ENCODE measurements at regions of chr2 and their contacts with region 1.

Region 1: GRCh38 chr2:96265840-96266679 is at the starts of genes CIAO1 and TMEM127:
- DNase-seq: peak; percentile 97 to 100 (median 99)

Region 2: GRCh38 chr2:96145036-96145847 is 120.8 kb before region 1 on chr2 and contains the start of gene DUSP2:
- intact Hi-C with region 1: loop called (anchors 2 kb)
- DNase-seq: peak; percentile 35 to 95 (median 58)

Region 3: DNA sequence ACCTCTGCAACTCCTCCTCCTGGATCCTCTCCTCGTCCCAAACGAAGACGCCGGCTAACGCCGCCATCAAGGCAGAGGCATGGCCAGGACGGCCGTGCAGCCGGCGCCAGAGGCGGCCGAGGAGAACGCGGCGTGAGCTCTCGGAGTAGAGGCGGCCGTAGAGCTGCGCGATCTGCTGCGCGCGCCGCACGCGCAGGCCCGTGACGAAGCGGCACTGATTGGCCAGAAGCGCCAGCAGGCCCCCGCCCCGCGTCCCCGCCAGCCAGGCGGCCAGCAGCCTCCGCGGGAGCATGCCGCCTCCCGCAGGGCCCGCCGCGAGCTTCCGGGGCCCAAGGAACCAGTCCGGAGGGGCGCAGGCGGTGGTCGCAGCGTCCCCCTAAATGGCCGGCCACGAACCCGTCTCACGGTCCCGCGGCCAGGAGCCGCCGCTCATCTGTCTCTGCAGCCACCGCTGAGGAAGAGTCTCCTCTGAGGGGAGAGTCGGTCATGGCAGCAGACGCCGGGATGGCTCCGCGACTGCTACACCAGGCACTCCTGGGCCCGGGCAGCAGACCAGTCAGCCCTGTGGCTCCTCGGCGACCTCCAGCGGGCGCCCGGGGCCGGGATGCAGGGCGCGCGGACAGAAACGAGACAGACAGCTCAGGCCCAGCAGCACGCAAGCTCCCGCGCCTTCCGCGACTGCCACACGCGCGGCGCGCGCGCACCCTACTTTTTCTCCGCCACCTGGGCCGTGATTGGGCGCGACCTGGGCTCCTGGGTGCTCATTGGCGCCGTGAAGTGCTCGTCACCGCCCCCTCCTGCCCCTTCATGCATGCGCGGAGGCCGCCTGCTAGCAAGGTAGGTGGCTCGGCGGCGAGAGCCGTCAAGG is 57.7 kb before region 1 on chr2 and contains the start of gene STARD7:
- intact Hi-C with region 1: loop called (anchors 2 kb)
- DNase-seq: peak; percentile 95 to 100 (median 98)

Region 4: GRCh38 chr2:96305091-96305978 is 39.3 kb after region 1 on chr2 and contains the start of gene SNRNP200:
- intact Hi-C with region 1: loop called (anchors 1 kb)
- DNase-seq: peak; percentile 86 to 99 (median 92)

Region 5: GRCh38 chr2:96437512-96437911 is 171.5 kb after region 1 on chr2:
- intact Hi-C with region 1: no loop called
- DNase-seq: no peak